H1 (cell line): ENCODE measurements at regions of chr9 and their contacts with region 1.

Region 1: DNA sequence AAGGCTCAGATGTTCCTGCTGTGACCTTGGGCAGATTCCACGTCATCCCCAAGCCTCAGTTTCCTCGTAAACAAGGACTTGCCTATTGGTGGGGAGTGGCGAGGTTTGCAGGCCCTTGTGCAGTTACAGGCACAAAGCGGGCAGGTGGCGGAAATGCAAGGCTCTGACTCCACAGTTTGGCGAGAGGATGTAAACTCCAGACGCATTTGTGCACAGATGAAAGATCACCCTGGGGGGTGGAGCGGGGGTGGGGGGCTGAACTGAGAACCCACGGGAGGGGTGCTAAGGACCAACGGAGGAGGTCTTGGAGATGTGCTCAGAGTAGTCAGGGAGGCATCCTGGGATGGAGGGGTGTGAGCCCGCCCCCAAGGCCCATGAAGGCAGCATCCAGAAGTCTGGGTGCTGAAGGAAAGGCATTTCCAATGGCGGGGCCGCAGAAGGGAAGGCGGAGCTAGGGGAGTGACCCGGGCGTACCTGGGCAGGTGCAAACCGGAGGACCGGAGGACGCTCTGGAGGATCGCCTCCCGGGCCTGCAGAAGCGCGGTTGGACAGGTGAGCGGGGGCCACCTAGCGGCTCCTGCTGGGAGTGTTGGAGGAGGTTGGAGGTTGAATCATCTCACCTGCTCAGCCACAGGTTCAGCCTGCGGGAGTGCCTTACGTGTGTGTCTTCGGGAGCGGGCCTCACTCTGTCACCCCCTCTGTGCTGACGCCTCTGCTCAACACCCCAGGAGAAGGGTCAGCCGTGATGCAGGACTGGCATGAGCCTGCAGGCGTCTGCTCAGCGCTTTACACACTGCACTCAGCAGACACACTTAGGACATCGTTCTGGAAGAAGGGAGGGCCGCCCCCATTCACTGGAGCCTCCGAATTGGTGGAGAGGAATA is 1.9 kb upstream of the FIBCD1 start:
- DNase-seq: peak; percentile 85 to 99
- H3K4me3 ChIP-seq: peak overlapping the region in 1 of 4 experiments; percentile 96; a peak in 3 of 8 replicates
- H3K27ac ChIP-seq: no peak overlapping the region
- H3K4me1 ChIP-seq: peaks cover 8 to 34% (median 15%) of the 10 kb centered on the region in 4 experiments
- H3K27me3 ChIP-seq: peaks cover 18 to 44% (median 32%) of the 10 kb centered on the region in 4 experiments
- CTCF ChIP-seq: peak in 2 of 3 experiments; percentile 90 to 97; a peak in 3 of 4 replicates
- EP300 ChIP-seq: no peak
- POLR2A ChIP-seq: no peak
- RAD21 ChIP-seq: peak; percentile 87 to 88

Region 2: DNA sequence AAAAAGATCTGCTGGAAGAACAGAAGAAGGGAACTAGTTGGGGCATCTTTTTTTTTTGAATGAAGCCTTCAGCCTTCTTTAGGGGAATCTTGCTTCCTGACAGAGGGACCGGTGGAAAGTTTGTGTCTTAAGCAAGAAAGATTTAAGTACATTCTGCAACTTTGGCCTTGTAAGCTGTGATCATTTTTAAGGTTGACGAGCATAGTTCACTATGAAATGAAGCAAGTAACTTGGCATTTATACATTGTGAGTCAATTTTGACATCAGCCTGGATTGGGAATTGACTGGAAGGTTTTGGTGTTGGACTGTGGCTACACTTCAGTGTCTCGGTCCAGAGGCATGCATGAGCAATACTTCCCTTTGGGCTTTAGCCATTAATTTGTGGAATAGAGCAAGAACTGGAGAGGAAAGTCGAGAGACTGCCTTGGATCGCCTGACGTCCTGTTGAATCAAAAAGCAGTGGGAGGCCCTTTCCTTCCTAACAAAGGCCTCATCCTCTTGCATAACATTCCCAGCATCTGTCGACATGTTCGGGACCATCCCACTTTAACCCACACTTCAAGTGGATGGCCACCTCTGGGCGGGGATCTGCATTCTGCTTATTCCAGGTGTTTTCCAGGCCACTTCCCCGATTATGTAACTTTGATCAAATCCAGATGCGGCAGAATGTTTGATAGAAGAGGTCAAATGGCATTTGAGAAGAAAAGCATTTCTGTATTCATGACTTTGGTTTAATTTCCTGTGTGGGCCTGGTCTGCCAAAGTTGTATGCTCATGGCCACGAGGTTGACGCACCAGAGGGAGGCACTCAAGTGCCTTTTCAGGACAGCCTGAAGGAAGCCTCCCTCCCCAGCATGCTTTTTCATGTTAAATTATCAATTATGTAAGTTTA is 93.4 kb before region 1 on chr9:
- CTCF ChIA-PET with region 1: no interaction called
- POLR2A ChIA-PET with region 1: no interaction called
- DNase-seq: no peak
- H3K4me3 ChIP-seq: no peak overlapping the region; a peak in 2 of 8 replicates
- H3K27ac ChIP-seq: peak overlapping the region; percentile 62
- H3K4me1 ChIP-seq: peaks cover 4 to 24% (median 13%) of the 10 kb centered on the region in 4 experiments
- H3K27me3 ChIP-seq: no peaks in the 10 kb centered on the region
- CTCF ChIP-seq: peak; percentile 18 to 44 (median 30); a peak in 3 of 4 replicates
- EP300 ChIP-seq: no peak
- POLR2A ChIP-seq: no peak
- RAD21 ChIP-seq: 0 out of 4 replicates have a peak, but pooled peaks of 1 of the 2 experiments have one; percentile 12

Region 3: GRCh38 chr9:130893341-130894101 is 47.4 kb before region 1 on chr9:
- CTCF ChIA-PET with region 1: interaction called, 38 read pairs
- POLR2A ChIA-PET with region 1: interaction called, 3 read pairs
- DNase-seq: no peak
- H3K4me3 ChIP-seq: no peak overlapping the region
- H3K27ac ChIP-seq: no peak overlapping the region
- H3K4me1 ChIP-seq: peaks cover 0 to 3% (median 0%) of the 10 kb centered on the region in 4 experiments; a peak in 3 of 7 replicates
- H3K27me3 ChIP-seq: no peaks in the 10 kb centered on the region
- CTCF ChIP-seq: peak in 2 of 3 experiments; percentile 48 to 53; a peak in 3 of 4 replicates
- EP300 ChIP-seq: no peak
- POLR2A ChIP-seq: no peak; a peak in 1 of 3 replicates
- RAD21 ChIP-seq: peak; percentile 55 to 70

Region 4: GRCh38 chr9:131036529-131037334 is 95.8 kb after region 1 on chr9:
- CTCF ChIA-PET with region 1: no interaction called
- POLR2A ChIA-PET with region 1: no interaction called
- DNase-seq: no peak
- H3K4me3 ChIP-seq: no peak overlapping the region
- H3K27ac ChIP-seq: no peak overlapping the region
- H3K4me1 ChIP-seq: no peaks in the 10 kb centered on the region; a peak in 2 of 7 replicates
- H3K27me3 ChIP-seq: no peaks in the 10 kb centered on the region
- CTCF ChIP-seq: no peak
- EP300 ChIP-seq: no peak
- POLR2A ChIP-seq: no peak
- RAD21 ChIP-seq: no peak